Dorsolateral prefrontal cortex (tissue), 120 donors: ENCODE measurements at regions of chr7 and their contacts with region 1.

Region 1: GRCh38 chr7:85890244-85890811 is 703.5 kb upstream of the SEMA3D start:
- DNase-seq: no peak
- H3K4me3 ChIP-seq: no peak overlapping the region
- H3K27ac ChIP-seq: no peak overlapping the region
- H3K27me3 ChIP-seq: no peaks in the 10 kb centered on the region
- CTCF ChIP-seq: peak; percentile 28 to 84 (median 73)

Region 2: DNA sequence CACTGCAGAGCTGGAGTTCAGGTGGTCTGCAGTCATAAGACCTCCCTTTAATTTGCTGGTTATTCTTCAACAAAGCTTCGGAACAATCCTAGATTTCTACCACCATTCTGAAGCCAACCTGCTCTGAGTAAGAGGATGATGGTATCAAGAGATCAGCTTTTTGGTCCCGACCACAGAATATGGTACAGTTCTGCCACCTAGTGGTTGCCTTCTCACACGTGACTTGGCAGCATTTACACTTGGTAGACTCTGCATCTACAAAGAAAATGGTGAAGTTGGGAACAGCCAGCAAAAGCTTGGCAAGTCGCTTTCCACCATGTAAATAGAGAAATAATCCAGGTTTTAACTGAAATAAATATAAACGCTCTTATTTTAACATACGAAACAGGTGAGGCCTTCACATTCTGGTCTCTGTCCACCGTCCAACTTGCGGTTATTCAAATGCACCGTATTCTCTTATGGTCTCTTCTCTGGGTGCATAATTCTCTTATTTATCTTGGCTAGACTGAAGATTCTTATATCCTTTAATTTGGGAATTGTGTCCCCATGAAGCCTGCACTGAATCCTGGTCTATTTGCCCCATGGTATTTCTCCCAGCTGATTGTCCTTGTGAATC is 579.5 kb after region 1 on chr7:
- intact Hi-C with region 1: loop called (anchors 5 to 10 kb)
- DNase-seq: peak; percentile 23 to 85 (median 52)
- H3K4me3 ChIP-seq: no peak overlapping the region
- H3K27ac ChIP-seq: no peak overlapping the region
- H3K27me3 ChIP-seq: no peaks in the 10 kb centered on the region
- CTCF ChIP-seq: peak; percentile 46 to 91 (median 73)